HCT116 (cell line): ENCODE measurements at regions of chr5 and their contacts with region 1.

Region 1: GRCh38 chr5:149485655-149486425 is 65.4 kb downstream of the CSNK1A1 start:
- DNase-seq: peak; percentile 90
- ATAC-seq: peak; percentile 84
- H3K4me3 ChIP-seq: peak overlapping the region in 1 of 2 experiments; percentile 20; a peak in 1 of 4 replicates
- H3K27ac ChIP-seq: peak overlapping the region; percentile 65
- H3K4me1 ChIP-seq: peaks cover 28 to 75% of the 10 kb centered on the region in 2 experiments
- H3K27me3 ChIP-seq: no peaks in the 10 kb centered on the region
- CTCF ChIP-seq: no peak
- POLR2A ChIP-seq: no peak
- RAD21 ChIP-seq: peak; percentile 9; the same call in 1 of the 2 replicates

Region 2: DNA sequence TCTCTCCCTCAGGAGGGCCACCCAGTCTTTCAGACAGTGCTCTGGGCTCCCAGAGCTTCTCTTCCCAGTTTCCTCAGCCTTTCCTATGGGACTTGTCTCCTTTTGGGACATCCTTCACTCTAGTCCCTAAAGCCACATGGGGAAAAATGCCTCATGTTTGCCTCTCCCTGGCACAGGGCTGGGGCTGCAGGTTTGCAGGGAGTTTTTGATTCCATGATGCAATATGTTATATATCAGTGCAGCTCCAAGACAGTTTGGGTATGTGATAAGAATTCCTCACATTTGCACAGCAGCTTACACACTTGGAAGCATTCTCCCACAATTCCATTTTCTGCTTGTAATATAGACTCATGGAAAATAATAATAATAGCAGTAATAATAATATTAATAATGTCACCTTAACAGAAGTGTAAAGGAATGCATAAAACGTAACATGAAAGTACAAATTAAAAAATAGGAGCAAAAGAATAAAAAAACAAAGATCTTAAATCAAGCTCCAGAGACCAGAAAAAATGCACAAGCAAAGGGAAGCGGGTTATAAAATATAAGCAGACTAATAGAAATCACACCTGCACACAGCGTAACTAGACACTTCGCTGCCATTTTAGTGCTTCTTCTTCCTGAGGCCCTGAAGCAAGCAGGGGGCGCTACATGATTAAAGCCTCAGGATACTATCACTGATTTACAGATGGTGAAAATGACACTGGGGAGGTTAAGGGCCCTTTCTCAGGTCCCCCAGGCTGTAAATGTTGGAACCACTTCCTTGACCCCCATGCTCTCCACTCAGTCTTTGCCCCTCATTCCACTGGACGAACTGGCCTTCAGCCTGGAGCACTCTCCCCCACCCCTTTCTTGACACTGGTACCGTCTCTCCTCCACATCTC is 36.8 kb before region 1 on chr5:
- CTCF ChIA-PET with region 1: interaction called, 3 read pairs
- POLR2A ChIA-PET with region 1: no interaction called
- RAD21 ChIA-PET with region 1: interaction called in 1 of 2 experiments, 5 read pairs
- intact Hi-C with region 1: loop called (anchors 5 kb)
- DNase-seq: no peak
- ATAC-seq: peak; percentile 58
- H3K4me3 ChIP-seq: no peak overlapping the region
- H3K27ac ChIP-seq: no peak overlapping the region
- H3K4me1 ChIP-seq: peaks cover 18 to 89% of the 10 kb centered on the region in 2 experiments
- H3K27me3 ChIP-seq: no peaks in the 10 kb centered on the region
- CTCF ChIP-seq: peak in 2 of 3 experiments; percentile 66; a peak in 4 of 6 replicates
- POLR2A ChIP-seq: no peak
- RAD21 ChIP-seq: no peak